CD8-positive, alpha-beta T cell (primary cell): ENCODE measurements at regions of chr16 and their contacts with region 1.

Region 1: GRCh38 chr16:25838724-25839186 is 147.0 kb downstream of the HS3ST4 start:
- DNase-seq: peak in 6 of 9 experiments; percentile 10 to 60 (median 33)
- ATAC-seq: no peak
- H3K4me3 ChIP-seq: no peak overlapping the region
- H3K4me3 Mint-ChIP-seq: no peak overlapping the region
- H3K27ac ChIP-seq: no peak overlapping the region
- H3K27ac Mint-ChIP-seq: no peak overlapping the region
- H3K4me1 ChIP-seq: no peaks in the 10 kb centered on the region
- H3K4me1 Mint-ChIP-seq: peaks cover 4% of the 10 kb centered on the region
- H3K27me3 ChIP-seq: no peaks in the 10 kb centered on the region
- H3K27me3 Mint-ChIP-seq: peaks cover 9% of the 10 kb centered on the region
- CTCF ChIP-seq: peak; percentile 84

Region 2: DNA sequence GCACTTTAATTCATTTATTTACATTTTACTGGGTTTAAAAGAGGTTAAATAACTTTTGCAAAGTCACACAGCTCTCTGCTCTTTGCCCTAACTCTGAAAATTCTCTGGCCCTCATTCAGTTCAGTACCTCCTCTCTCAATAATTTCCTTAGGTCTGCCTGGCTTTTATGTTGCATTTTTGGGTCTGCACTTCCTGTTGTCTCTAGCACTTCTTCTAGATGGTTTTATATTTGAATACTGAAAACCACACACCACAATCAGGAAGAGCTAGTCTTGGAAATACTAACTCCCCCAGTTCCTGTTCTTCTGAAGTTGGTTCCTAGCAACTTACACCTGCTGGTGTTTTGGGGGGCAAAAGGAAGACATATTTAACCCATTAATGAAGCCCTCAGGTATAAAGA is 430.9 kb after region 1 on chr16:
- CTCF ChIA-PET with region 1: no interaction called
- POLR2A ChIA-PET with region 1: no interaction called
- intact Hi-C with region 1: no loop called
- DNase-seq: peak in 2 of 9 experiments; percentile 1 to 11
- ATAC-seq: no peak
- H3K4me3 ChIP-seq: no peak overlapping the region
- H3K4me3 Mint-ChIP-seq: no peak overlapping the region
- H3K27ac ChIP-seq: no peak overlapping the region
- H3K27ac Mint-ChIP-seq: no peak overlapping the region
- H3K4me1 ChIP-seq: peaks cover 24% of the 10 kb centered on the region
- H3K4me1 Mint-ChIP-seq: peaks cover 27% of the 10 kb centered on the region
- H3K27me3 ChIP-seq: no peaks in the 10 kb centered on the region
- H3K27me3 Mint-ChIP-seq: no peaks in the 10 kb centered on the region
- CTCF ChIP-seq: no peak

Region 3: DNA sequence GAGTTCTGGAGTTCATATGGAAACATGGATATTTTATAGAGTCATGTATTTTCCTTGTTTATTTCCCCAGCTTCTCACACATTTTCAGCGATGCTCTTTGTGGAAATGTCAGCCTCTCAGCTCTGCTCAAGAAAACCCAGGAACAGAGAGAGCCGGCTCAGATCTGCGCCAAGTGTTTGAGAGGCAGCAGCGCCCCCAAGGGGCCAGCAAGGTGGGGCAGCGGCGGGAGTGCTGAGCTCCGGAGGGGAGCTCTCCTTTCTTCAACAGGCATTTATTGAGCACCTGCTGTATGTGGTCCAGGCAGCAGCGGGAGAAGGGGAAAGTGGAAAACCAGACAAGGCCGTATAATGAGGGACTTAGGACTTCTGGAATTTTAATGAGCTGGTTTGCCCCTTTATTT is 806.9 kb after region 1 on chr16:
- CTCF ChIA-PET with region 1: interaction called, 3 read pairs
- POLR2A ChIA-PET with region 1: no interaction called
- intact Hi-C with region 1: loop called in 1 of 2 experiments (anchors 5 kb)
- DNase-seq: peak in 5 of 9 experiments; percentile 23 to 54 (median 41)
- ATAC-seq: no peak
- H3K4me3 ChIP-seq: no peak overlapping the region
- H3K4me3 Mint-ChIP-seq: no peak overlapping the region
- H3K27ac ChIP-seq: no peak overlapping the region
- H3K27ac Mint-ChIP-seq: no peak overlapping the region
- H3K4me1 ChIP-seq: no peaks in the 10 kb centered on the region
- H3K4me1 Mint-ChIP-seq: peaks cover 6% of the 10 kb centered on the region
- H3K27me3 ChIP-seq: peaks cover 0 to 4% of the 10 kb centered on the region in 2 experiments
- H3K27me3 Mint-ChIP-seq: peaks cover 3% of the 10 kb centered on the region
- CTCF ChIP-seq: no peak